ENCODE measurements at regions of chr11 and their contacts with region 1.

Region 1: DNA sequence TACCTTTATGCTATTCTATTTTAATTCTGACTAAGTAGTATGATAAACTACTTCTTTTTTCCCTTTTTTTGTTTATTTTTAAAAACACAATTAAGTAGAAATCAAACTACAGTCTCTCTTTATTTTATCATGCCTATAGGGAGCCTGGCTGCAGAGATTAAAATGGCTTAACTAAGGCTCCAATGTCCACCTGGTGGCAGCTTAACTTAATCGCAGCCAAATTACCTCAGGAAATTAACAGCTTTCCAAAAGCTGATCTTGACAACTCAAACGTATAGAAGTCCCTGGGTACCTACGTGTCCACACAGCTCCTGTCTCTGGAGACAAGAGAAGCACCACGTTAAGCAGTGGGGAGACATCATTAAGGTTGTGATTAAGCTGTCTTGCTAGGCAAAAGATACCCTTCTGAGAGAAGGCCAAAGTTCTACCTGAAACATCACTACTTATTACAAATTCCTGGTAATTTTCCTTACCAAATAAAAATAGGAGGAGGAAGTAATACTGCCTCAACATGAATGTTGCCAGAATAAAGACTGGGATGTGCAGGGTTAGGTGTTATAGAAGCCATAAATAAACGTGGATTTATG is 63.2 kb upstream of the SNX19 start:
- DNase-seq: no peak
- H3K4me3 ChIP-seq: no peak overlapping the region
- H3K27ac ChIP-seq: no peak overlapping the region
- H3K4me1 ChIP-seq: no peaks in the 10 kb centered on the region
- H3K27me3 ChIP-seq: no peaks in the 10 kb centered on the region
- CTCF ChIP-seq: peak in 2 of 3 experiments; percentile 58 to 69; a peak in 3 of 4 replicates
- EP300 ChIP-seq: no peak
- POLR2A ChIP-seq: no peak
- RAD21 ChIP-seq: peak; percentile 52 to 62

Region 2: GRCh38 chr11:130964058-130964792 is 15.3 kb before region 1 on chr11:
- CTCF ChIA-PET with region 1: interaction called, 16 read pairs
- POLR2A ChIA-PET with region 1: no interaction called
- DNase-seq: no peak
- H3K4me3 ChIP-seq: no peak overlapping the region
- H3K27ac ChIP-seq: no peak overlapping the region
- H3K4me1 ChIP-seq: no peaks in the 10 kb centered on the region
- H3K27me3 ChIP-seq: no peaks in the 10 kb centered on the region
- CTCF ChIP-seq: no peak
- EP300 ChIP-seq: no peak
- POLR2A ChIP-seq: no peak
- RAD21 ChIP-seq: no peak

Region 3: DNA sequence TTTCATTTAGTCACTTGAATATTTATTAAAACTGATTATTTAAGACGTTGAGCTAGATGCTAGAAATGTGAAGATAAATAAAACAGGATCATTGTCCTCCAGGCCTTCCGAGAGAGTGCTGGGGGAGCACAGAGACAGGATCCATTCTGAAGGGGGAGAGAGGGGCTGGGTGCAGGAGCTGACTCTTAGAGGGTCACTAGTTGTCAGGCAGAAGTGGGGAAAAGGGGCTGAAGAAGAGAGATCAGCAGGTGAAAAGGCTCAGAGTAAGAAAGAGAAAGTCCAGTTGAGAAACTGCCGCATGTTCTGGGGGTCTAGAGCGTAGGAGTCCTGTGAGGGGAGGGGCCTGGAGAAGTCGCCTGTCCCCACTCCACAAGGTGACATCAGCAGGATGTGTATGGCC is 143.0 kb after region 1 on chr11:
- CTCF ChIA-PET with region 1: no interaction called
- POLR2A ChIA-PET with region 1: no interaction called
- DNase-seq: no peak
- H3K4me3 ChIP-seq: no peak overlapping the region
- H3K27ac ChIP-seq: no peak overlapping the region
- H3K4me1 ChIP-seq: peaks cover 0 to 5% (median 2%) of the 10 kb centered on the region in 4 experiments; a peak in 1 of 7 replicates
- H3K27me3 ChIP-seq: no peaks in the 10 kb centered on the region
- CTCF ChIP-seq: no peak
- EP300 ChIP-seq: no peak
- POLR2A ChIP-seq: no peak
- RAD21 ChIP-seq: no peak

Region 4: GRCh38 chr11:131186629-131187101 is 207.2 kb after region 1 on chr11:
- CTCF ChIA-PET with region 1: no interaction called
- POLR2A ChIA-PET with region 1: no interaction called
- DNase-seq: peak in 1 of 2 experiments; percentile 61
- H3K4me3 ChIP-seq: no peak overlapping the region
- H3K27ac ChIP-seq: no peak overlapping the region
- H3K4me1 ChIP-seq: peaks cover 2 to 4% (median 3%) of the 10 kb centered on the region in 4 experiments; a peak in 3 of 7 replicates
- H3K27me3 ChIP-seq: no peaks in the 10 kb centered on the region
- CTCF ChIP-seq: no peak
- EP300 ChIP-seq: no peak
- POLR2A ChIP-seq: no peak
- RAD21 ChIP-seq: no peak

Measured in H1 (cell line).